Endothelial cell of umbilical vein (primary cell): ENCODE measurements at regions of chr1 and their contacts with region 1.

Region 1: GRCh38 chr1:154352581-154353459 is 27.5 kb downstream of the ATP8B2 start:
- DNase-seq: peak; percentile 56
- H3K4me3 ChIP-seq: peak overlapping the region in 2 of 3 experiments; percentile 19 to 46
- H3K27ac ChIP-seq: no peak overlapping the region
- H3K4me1 ChIP-seq: peaks cover 14% of the 10 kb centered on the region
- H3K27me3 ChIP-seq: no peaks in the 10 kb centered on the region
- CTCF ChIP-seq: peak in 1 of 2 donors; percentile 1
- POLR2A ChIP-seq: no peak

Region 2: DNA sequence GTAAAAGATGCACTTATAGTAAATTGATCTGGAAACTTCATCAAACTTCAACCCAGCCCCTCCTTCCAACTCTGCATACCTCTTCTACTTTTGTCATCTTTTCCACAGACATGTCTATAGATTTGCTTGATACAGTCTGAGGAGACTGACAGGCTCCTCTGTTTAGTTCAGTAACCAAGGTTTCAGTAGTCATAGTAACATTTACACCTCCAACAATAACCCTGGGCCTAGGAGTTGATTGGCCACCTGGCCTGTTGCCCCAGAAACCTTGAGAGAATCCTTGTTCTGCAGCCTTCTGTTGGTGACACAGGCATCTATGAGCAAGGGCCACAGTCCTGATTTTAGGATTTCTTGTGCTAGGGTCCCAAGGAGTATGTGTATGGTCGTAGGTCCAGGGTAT is 146.6 kb before region 1 on chr1 and contains the start of gene CFAP141:
- CTCF ChIA-PET with region 1: no interaction called
- POLR2A ChIA-PET with region 1: no interaction called
- dilution Hi-C with region 1: no loop called
- intact Hi-C with region 1: no loop called
- DNase-seq: no peak
- H3K4me3 ChIP-seq: no peak within 1 kb of the TSS
- H3K27ac ChIP-seq: no peak within 1 kb of the TSS
- H3K4me1 ChIP-seq: no peaks in the 10 kb centered on the region
- H3K27me3 ChIP-seq: no peaks in the 10 kb centered on the region
- CTCF ChIP-seq: no peak
- POLR2A ChIP-seq: no peak
- total RNA-seq, gene CFAP141: not detected in 2 replicates

Region 3: GRCh38 chr1:154313066-154313356 is 39.8 kb before region 1 on chr1:
- CTCF ChIA-PET with region 1: no interaction called
- POLR2A ChIA-PET with region 1: no interaction called
- dilution Hi-C with region 1: no loop called
- intact Hi-C with region 1: no loop called
- DNase-seq: no peak
- H3K4me3 ChIP-seq: no peak overlapping the region
- H3K27ac ChIP-seq: no peak overlapping the region
- H3K4me1 ChIP-seq: no peaks in the 10 kb centered on the region
- H3K27me3 ChIP-seq: peaks cover 0 to 4% of the 10 kb centered on the region in 2 experiments
- CTCF ChIP-seq: no peak
- POLR2A ChIP-seq: no peak

Region 4: GRCh38 chr1:154324669-154325582 is 27.9 kb before region 1 on chr1 and contains the start of gene ATP8B2:
- CTCF ChIA-PET with region 1: interaction called, 3 read pairs
- POLR2A ChIA-PET with region 1: no interaction called
- dilution Hi-C with region 1: no loop called
- intact Hi-C with region 1: loop called (anchors 1 kb)
- DNase-seq: peak; percentile 79
- H3K4me3 ChIP-seq: peak within 1 kb of the TSS; percentile 78 to 88 (median 85)
- H3K27ac ChIP-seq: peak within 1 kb of the TSS; percentile 52
- H3K4me1 ChIP-seq: peaks cover 22% of the 10 kb centered on the region
- H3K27me3 ChIP-seq: peaks cover 0 to 8% of the 10 kb centered on the region in 2 experiments
- CTCF ChIP-seq: peak; percentile 93 to 94
- POLR2A ChIP-seq: no peak
- total RNA-seq, gene ATP8B2: 60.0 and 64.7 TPM in 2 replicates